ENCODE measurements at regions of chr1 and their contacts with region 1.

Region 1: DNA sequence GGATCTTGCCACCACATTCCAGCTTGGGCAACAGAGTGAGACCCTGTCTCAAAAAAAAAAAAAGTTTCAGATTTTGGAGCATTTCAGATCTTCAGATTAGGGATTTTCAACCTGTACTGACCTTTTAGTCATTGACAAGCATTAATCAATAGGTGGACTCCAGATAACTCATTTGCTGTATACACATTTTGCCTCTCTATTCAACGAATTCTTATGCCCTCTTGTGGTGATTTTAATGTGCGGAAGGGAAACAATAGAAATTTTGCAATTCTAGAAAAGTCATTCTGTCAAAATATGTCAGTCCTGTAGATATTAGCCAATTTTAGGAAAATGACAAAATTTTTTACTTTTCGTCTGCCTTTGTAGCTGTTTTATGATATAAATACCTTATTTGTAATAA is 11.7 kb upstream of the OR2G2 start:
- DNase-seq: peak; percentile 7
- H3K4me3 ChIP-seq: no peak overlapping the region
- H3K27ac ChIP-seq: no peak overlapping the region
- H3K4me1 ChIP-seq: no peaks in the 10 kb centered on the region
- H3K27me3 ChIP-seq: no peaks in the 10 kb centered on the region
- CTCF ChIP-seq: peak in 1 of 2 donors; percentile 35

Region 2: GRCh38 chr1:247390116-247390791 is 186.2 kb before region 1 on chr1:
- CTCF ChIA-PET with region 1: no interaction called
- dilution Hi-C with region 1: no loop called
- in situ Hi-C with region 1: no loop called
- intact Hi-C with region 1: loop called (anchors 5 kb)
- DNase-seq: peak; percentile 66
- H3K4me3 ChIP-seq: peak overlapping the region in 1 of 3 experiments; percentile 14
- H3K27ac ChIP-seq: no peak overlapping the region
- H3K4me1 ChIP-seq: no peaks in the 10 kb centered on the region
- H3K27me3 ChIP-seq: no peaks in the 10 kb centered on the region
- CTCF ChIP-seq: peak; percentile 79 to 90

Measured in mammary epithelial cell (primary cell).